CD14-positive monocyte (primary cell): ENCODE measurements at regions of chr9 and their contacts with region 1.

Region 1: DNA sequence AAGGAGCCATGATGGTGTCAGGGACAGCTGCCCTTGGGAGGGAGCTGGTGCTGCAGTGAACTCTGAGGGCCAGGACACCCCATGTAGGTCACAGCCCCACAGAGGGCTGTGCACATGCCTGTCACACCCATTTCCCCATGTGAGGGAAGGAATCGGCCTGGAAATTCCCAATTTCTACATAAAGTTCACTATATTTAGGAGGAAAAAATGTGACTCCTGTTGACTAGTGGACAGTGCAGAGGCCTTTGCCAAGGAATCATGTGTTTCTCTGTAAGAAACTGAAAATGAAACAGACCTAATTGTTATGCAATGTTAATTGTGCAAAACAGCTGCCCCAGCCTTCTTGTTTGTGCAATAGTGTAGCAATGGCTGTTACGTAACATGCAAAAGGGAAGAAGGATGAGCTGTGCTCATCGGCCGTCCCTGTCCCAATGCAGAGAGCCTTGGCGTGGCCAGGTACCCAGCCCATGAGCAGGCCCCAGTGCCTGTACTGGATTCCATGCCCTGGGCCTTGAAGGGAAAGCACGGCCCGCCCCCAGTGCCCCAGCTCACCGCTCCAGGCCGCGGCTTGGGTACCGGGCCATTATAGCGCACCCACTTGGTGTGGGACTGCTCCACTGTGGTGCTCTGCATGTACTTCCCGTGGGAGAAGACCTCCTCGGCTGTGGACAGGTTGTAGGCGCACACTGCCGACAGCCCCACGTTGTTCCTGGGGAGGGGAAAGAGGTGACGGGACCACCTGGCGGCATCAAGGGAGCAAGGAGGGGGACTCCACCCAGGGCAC is 70.0 kb downstream of the SECISBP2 start:
- DNase-seq: peak; percentile 96 to 98 (median 97)
- H3K4me3 ChIP-seq: peak overlapping the region in 1 of 3 experiments; percentile 31
- H3K4me3 Mint-ChIP-seq: no peak overlapping the region
- H3K27ac ChIP-seq: peak overlapping the region; percentile 85
- H3K27ac Mint-ChIP-seq: peak overlapping the region; percentile 84 to 96 (median 94)
- H3K4me1 ChIP-seq: peaks cover 28 to 50% of the 10 kb centered on the region in 2 donors
- H3K4me1 Mint-ChIP-seq: peaks cover 56% of the 10 kb centered on the region
- H3K27me3 ChIP-seq: no peaks in the 10 kb centered on the region
- H3K27me3 Mint-ChIP-seq: peaks cover 0 to 1% (median 0%) of the 10 kb centered on the region in 3 donors
- CTCF ChIP-seq: no peak

Region 2: DNA sequence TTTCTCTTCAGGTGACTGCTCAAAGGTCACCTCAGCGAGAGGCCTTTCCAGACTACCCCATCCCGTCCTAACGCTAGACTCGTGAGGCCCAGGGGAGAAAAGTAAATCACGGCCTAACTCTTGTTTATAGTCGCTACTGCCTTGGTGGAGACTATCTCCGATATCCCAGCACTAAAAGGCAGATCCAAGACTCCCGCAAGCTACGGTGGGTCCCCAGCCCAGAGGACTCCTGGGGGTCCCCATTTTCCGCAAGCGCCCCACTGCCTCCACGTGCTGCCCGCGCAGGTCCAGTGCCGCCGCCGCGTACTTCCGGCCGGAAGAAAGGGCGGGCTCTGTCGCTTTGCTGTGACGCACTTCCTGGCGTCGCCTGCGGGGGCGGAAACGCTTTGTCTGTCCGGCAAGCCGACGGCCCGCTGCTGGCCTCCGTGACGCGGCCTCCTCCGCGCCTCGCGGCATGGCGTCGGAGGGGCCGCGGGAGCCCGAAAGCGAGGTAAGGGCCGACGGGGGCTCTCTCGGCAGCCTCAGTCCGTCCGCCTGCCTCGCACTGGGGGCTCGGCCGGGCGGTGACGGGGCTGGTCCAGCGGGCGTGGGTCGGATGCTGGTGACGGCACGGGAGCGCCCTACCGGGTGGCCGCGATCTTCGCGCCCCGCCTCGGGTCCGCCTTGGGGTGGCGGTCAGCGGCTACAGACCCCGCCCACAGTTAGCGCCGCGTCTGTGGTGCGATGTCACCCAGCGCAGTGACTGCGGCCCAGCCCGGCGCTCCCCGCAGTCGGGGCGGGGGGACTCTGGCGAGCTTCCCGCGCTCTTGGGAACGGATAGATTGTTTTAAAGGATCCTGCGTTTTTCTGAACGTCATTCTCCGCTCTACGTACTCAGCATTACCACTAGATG is 69.9 kb before region 1 on chr9 and contains the start of gene SECISBP2:
- intact Hi-C with region 1: loop called (anchors 5 to 10 kb)
- DNase-seq: peak; percentile 91 to 96 (median 95)
- H3K4me3 ChIP-seq: peak within 1 kb of the TSS; percentile 54 to 77 (median 76)
- H3K4me3 Mint-ChIP-seq: peak within 1 kb of the TSS; percentile 86 to 92
- H3K27ac ChIP-seq: peak within 1 kb of the TSS; percentile 96
- H3K27ac Mint-ChIP-seq: peak within 1 kb of the TSS; percentile 97 to 98 (median 98)
- H3K4me1 ChIP-seq: peaks cover 31 to 45% of the 10 kb centered on the region in 2 donors
- H3K4me1 Mint-ChIP-seq: peaks cover 53% of the 10 kb centered on the region
- H3K27me3 ChIP-seq: no peaks in the 10 kb centered on the region
- H3K27me3 Mint-ChIP-seq: no peaks in the 10 kb centered on the region
- CTCF ChIP-seq: peak; percentile 79
- polyA plus RNA-seq, gene SECISBP2: 8.6 to 51.4 (median 9.8) TPM

Region 3: DNA sequence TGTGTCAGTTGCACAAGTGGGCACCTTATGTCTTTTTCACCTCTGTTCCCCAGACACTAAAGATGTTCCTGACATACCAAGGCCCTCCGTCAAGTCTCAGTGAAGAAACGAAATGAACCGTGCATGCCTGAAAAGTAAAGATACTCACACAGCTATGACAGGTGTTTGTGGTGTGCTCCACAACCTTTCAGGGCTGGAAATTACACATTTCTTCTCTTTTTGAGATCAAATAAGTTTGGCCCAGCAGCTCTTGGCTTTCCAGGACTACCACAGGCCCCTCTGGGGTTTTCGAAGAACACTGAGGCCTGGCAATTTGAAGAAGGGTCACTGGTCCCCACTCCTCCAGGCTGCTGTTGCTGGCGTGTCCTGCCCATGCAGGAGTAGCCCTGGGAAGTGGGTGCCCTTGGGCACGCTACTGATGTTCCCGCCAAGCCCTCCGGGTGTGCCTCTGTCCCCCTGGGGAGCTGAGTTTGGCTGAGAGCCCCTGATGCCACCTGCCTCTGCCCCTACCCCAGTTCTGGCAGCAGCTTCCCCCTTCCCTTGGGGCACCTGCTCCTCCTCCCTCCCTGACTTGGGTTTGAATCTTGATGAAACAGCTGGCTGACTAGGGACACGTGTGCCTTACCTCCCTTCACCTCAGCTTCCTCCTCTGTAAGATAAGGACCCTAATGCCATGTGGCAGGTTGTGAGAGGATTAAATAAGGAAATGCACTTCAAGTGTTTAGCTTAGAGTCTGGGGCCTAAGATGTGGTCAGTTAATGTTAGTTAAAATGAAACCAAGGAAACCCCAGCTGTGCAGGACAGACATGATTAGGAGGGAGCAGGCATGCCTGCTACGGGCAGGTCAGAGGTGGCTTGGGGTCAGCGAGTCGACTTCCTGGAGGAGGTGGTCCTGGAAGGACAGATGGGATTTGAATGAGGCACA is 167.4 kb after region 1 on chr9:
- intact Hi-C with region 1: loop called in 1 of 2 experiments (anchors 10 kb)
- DNase-seq: peak; percentile 15 to 50 (median 32)
- H3K4me3 ChIP-seq: peak overlapping the region in 1 of 3 experiments; percentile 68
- H3K4me3 Mint-ChIP-seq: peak overlapping the region; percentile 67 to 86
- H3K27ac ChIP-seq: peak overlapping the region; percentile 49 to 90
- H3K27ac Mint-ChIP-seq: peak overlapping the region; percentile 93 to 99 (median 96)
- H3K4me1 ChIP-seq: peaks cover 23 to 36% of the 10 kb centered on the region in 2 donors
- H3K4me1 Mint-ChIP-seq: peaks cover 37% of the 10 kb centered on the region
- H3K27me3 ChIP-seq: no peaks in the 10 kb centered on the region
- H3K27me3 Mint-ChIP-seq: peaks cover 0 to 6% (median 4%) of the 10 kb centered on the region in 3 donors
- CTCF ChIP-seq: no peak